Aorta (tissue), 5 donors: ENCODE measurements at regions of chr17 and their contacts with region 1.

Region 1: GRCh38 chr17:21400816-21401593 is 24.8 kb downstream of the KCNJ12 start:
- DNase-seq: no peak
- ATAC-seq: no peak
- H3K4me3 ChIP-seq: no peak overlapping the region
- H3K27ac ChIP-seq: no peak overlapping the region
- H3K4me1 ChIP-seq: no peaks in the 10 kb centered on the region
- H3K27me3 ChIP-seq: no peaks in the 10 kb centered on the region

Region 2: DNA sequence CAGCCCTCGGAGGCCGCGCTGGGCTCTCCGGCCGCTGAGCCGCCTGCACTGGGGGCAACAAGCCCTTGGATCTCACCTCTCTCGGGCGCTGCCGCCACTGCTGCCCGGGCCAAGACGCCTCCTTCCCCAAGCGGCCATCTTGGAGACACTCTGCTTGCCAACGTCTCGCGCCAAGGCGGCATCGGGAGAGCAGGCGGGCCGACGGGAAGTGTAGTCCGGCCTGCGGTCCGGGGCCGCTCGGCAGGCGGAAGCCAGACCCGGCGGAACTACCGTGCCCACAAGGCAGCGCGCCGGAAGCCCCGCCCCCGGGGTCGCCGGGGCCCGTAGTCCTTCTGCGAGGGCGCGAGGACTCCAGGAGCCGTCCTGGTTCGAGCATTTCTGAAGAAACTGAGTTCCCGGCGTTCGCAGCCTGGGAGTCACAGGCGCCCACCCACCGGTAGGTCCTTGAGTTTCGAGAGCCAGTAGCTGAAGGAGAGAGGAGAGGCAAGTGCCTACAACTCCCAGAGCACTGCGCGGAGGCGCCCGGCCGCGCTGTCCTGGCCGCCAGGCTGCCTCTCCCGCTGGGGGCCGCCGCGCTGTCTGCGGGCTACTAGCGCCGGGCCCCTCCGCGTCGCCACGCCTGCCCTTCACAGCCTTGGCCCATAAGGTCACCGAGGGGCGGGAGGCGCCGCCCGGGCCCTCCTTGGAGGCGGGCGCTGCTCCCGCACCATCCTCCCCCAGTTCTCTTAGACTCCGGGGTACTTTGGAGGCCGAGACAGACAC is 186.8 kb before region 1 on chr17 and contains the start of gene TMEM11:
- intact Hi-C with region 1: no loop called
- DNase-seq: peak; percentile 98 to 99
- ATAC-seq: peak; percentile 99
- H3K4me3 ChIP-seq: peak within 1 kb of the TSS; percentile 60 to 78
- H3K27ac ChIP-seq: peak within 1 kb of the TSS; percentile 45 to 57
- H3K4me1 ChIP-seq: no peaks in the 10 kb centered on the region
- H3K27me3 ChIP-seq: no peaks in the 10 kb centered on the region
- total RNA-seq, gene TMEM11: 16.8 to 17.7 TPM

Region 3: DNA sequence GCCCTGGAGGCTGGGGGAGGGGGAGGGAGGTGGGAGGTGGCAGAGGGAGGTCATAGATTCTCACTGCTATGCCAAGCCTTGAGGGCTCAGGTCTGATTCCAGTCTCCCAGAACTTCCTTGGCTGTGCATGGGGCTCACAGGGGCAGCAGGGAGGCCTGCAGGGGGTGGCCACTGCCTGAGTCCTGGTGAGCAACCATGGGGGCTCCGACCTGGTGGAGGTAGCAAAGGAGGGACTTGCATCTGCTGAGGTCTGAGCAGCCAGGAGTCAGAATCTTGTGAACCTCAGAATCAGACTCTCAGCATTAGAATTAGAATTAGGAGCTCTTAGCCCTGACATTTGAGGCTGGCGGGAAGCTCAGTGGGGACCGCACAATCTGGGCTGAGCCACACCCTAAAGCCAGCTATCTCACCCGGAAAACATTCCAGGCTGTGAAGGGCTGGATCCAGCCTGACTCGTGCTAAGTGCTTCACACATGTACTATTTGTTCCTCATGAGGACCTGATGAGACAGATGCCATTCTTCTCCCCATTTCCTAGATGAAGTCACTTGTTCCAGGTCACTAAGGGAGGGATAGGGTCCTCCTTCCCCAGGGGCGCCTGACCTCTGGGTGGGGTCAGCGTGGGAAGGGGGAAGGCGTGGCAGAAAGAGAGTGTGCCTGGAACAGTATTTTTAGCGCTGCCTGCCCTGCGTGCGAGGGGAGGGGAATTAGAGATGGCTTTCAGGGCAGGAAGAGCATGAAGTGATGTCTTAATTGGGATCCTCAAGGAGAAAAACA is 42.1 kb before region 1 on chr17:
- intact Hi-C with region 1: no loop called
- DNase-seq: no peak
- ATAC-seq: no peak
- H3K4me3 ChIP-seq: no peak overlapping the region
- H3K27ac ChIP-seq: no peak overlapping the region
- H3K4me1 ChIP-seq: no peaks in the 10 kb centered on the region
- H3K27me3 ChIP-seq: no peaks in the 10 kb centered on the region

Region 4: GRCh38 chr17:21425736-21426135 is 24.7 kb after region 1 on chr17:
- intact Hi-C with region 1: no loop called
- DNase-seq: no peak
- ATAC-seq: no peak
- H3K4me3 ChIP-seq: no peak overlapping the region
- H3K27ac ChIP-seq: no peak overlapping the region
- H3K4me1 ChIP-seq: no peaks in the 10 kb centered on the region
- H3K27me3 ChIP-seq: no peaks in the 10 kb centered on the region

Region 5: DNA sequence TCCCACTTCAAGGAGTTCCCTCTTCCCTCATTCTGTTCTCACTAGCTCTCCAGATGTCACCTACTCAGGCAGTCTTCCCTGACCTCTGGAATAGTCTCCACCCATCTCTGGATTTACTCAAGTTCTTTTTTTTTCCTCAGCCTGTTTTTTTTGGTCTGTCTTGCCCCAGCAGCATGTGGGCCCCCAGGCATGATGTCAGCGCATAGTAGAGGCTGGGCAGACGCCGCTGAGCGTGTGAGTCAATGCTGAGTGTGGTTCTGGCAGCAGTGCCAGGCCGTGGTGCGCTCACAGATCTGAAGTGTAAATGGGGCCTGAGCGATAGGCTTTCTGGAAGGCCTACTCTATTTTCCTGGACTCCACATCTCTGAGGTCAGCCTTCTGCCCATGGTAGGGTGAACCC is 288.6 kb after region 1 on chr17:
- intact Hi-C with region 1: loop called (anchors 5 kb)
- DNase-seq: peak; percentile 81 to 91
- ATAC-seq: peak; percentile 7
- H3K4me3 ChIP-seq: no peak overlapping the region
- H3K27ac ChIP-seq: no peak overlapping the region
- H3K4me1 ChIP-seq: no peaks in the 10 kb centered on the region
- H3K27me3 ChIP-seq: no peaks in the 10 kb centered on the region